OCI-LY7 (cell line): ENCODE measurements at regions of chr2 and their contacts with region 1.

Region 1: DNA sequence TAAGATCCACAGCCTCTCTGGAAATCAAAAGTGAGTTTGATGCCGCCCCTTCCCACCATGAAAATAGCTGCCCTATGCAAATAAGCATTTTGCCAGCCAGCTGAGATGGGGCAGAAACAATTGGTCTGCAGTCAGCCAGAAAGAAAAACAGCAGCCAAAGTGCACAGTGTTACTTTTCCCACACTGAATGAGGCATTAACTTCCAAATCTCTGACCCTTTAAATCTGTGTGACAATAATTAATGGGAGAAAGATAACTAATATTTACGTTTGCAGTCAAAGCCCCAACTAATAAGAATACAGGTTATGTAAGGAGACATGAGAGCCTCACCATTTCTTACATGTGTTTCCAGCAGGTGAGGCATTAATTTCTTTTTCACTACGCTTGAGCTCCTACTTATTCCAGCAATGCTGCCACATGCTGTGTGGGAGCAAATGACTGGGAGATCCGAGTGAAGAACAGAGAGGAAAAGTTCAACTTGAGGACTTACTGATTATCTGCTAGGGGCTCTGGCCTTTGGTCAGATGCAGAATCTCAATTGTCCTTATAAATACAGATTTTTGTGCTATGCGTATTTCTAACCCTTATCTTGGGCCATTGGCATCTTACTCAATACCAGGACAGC is 339.0 kb downstream of the SATB2 start:
- DNase-seq: peak; percentile 14
- H3K4me3 ChIP-seq: no peak overlapping the region
- H3K27ac ChIP-seq: no peak overlapping the region
- H3K4me1 ChIP-seq: peaks cover 25% of the 10 kb centered on the region
- CTCF ChIP-seq: no peak

Region 2: GRCh38 chr2:199042660-199043379 is 75.9 kb before region 1 on chr2:
- CTCF ChIA-PET with region 1: no interaction called
- POLR2A ChIA-PET with region 1: no interaction called
- intact Hi-C with region 1: no loop called
- DNase-seq: no peak
- H3K4me3 ChIP-seq: no peak overlapping the region
- H3K27ac ChIP-seq: no peak overlapping the region
- H3K4me1 ChIP-seq: peaks cover 7% of the 10 kb centered on the region
- CTCF ChIP-seq: no peak

Region 3: GRCh38 chr2:199108056-199108455 is 10.7 kb before region 1 on chr2:
- CTCF ChIA-PET with region 1: no interaction called
- POLR2A ChIA-PET with region 1: interaction called, 10 read pairs
- intact Hi-C with region 1: no loop called
- DNase-seq: no peak
- H3K4me3 ChIP-seq: no peak overlapping the region
- H3K27ac ChIP-seq: no peak overlapping the region
- H3K4me1 ChIP-seq: peaks cover 9% of the 10 kb centered on the region
- CTCF ChIP-seq: no peak